RWPE1 (cell line): ENCODE measurements at regions of chr1 and their contacts with region 1.

Region 1: GRCh38 chr1:8858888-8859706 is 19.4 kb downstream of the ENO1 start:
- DNase-seq: no peak
- H3K27ac ChIP-seq: peak overlapping the region; percentile 68
- CTCF ChIP-seq: peak; percentile 75

Region 2: GRCh38 chr1:8595941-8596340 is 263.2 kb before region 1 on chr1:
- CTCF ChIA-PET with region 1: no interaction called
- POLR2A ChIA-PET with region 1: interaction called, 12 read pairs
- DNase-seq: no peak
- H3K27ac ChIP-seq: no peak overlapping the region
- CTCF ChIP-seq: no peak